Mucosa of descending colon (tissue), 3 donors: ENCODE measurements at regions of chrX and their contacts with region 1.

Region 1: GRCh38 chrX:83469551-83469950 is 38.5 kb upstream of the POU3F4 start:
- DNase-seq: peak in 1 of 3 donors; percentile 34
- ATAC-seq: peak; percentile 44
- H3K4me3 ChIP-seq: no peak overlapping the region
- H3K4me1 ChIP-seq: no peaks in the 10 kb centered on the region
- CTCF ChIP-seq: no peak

Region 2: GRCh38 chrX:83630662-83631061 is 161.1 kb after region 1 on chrX:
- intact Hi-C with region 1: loop called in 1 of 2 experiments (anchors 10 kb)
- DNase-seq: peak in 1 of 3 donors; percentile 36
- ATAC-seq: no peak
- H3K4me3 ChIP-seq: no peak overlapping the region
- H3K4me1 ChIP-seq: no peaks in the 10 kb centered on the region
- CTCF ChIP-seq: no peak